Activated CD4-positive, alpha-beta memory T cell treated with anti-CD3 and anti-CD28 coated beads for 36 hours (primary cell): ENCODE measurements at regions of chr2 and their contacts with region 1.

Region 1: DNA sequence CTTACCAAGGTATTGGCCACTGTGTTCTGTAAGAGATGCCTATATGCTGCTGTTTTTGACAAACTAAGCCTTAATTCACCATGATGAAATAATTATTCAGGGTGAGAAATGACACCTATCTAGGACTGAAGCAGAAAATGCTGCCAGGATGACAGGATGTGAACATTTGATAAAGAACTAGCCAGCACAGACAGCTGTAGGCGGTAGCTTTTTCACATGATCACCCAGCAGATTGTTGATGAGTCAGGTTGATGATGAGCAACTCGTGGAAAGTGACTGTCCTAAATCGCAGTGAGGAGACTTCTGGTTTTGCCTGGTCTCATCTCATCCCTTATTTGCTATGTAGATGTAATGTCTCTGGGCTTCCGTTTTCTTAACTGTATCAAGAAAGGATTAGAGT is 144.1 kb downstream of the PRPF40A start:
- DNase-seq: peak; percentile 70
- H3K4me3 Mint-ChIP-seq: no peak overlapping the region
- H3K27ac Mint-ChIP-seq: peak overlapping the region; percentile 35
- H3K4me1 Mint-ChIP-seq: peaks cover 10% of the 10 kb centered on the region
- H3K27me3 Mint-ChIP-seq: peaks cover 14% of the 10 kb centered on the region

Region 2: DNA sequence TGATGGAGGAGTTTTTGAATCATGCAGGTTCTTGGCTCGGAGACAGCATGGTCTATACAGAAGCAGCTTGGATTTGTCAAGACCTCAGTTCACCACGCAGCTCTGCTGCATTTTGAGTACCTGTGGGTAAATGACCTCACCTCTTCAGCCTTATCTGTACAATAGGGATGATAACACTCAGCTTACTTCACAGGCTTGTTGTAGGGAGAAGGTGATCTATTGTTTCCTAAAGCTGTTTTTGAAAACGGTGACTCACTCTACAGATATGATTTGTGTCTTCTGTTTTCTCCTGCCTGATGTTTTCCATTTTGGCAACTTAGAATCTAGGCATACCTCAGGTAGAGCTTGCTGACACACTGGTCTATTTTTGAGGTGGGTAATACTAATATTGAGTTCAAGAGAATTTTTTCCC is 157.9 kb before region 1 on chr2:
- CTCF ChIA-PET with region 1: no interaction called
- POLR2A ChIA-PET with region 1: no interaction called
- intact Hi-C with region 1: loop called (anchors 1 kb)
- DNase-seq: peak; percentile 58
- H3K4me3 Mint-ChIP-seq: no peak overlapping the region
- H3K27ac Mint-ChIP-seq: peak overlapping the region; percentile 64
- H3K4me1 Mint-ChIP-seq: peaks cover 23% of the 10 kb centered on the region
- H3K27me3 Mint-ChIP-seq: peaks cover 20% of the 10 kb centered on the region

Region 3: GRCh38 chr2:152585830-152586484 is 12.8 kb after region 1 on chr2:
- CTCF ChIA-PET with region 1: interaction called, 3 read pairs
- POLR2A ChIA-PET with region 1: interaction called, 4 read pairs
- intact Hi-C with region 1: loop called (anchors 2 kb)
- DNase-seq: no peak
- H3K4me3 Mint-ChIP-seq: no peak overlapping the region
- H3K27ac Mint-ChIP-seq: no peak overlapping the region
- H3K4me1 Mint-ChIP-seq: peaks cover 11% of the 10 kb centered on the region
- H3K27me3 Mint-ChIP-seq: peaks cover 10% of the 10 kb centered on the region

Region 4: DNA sequence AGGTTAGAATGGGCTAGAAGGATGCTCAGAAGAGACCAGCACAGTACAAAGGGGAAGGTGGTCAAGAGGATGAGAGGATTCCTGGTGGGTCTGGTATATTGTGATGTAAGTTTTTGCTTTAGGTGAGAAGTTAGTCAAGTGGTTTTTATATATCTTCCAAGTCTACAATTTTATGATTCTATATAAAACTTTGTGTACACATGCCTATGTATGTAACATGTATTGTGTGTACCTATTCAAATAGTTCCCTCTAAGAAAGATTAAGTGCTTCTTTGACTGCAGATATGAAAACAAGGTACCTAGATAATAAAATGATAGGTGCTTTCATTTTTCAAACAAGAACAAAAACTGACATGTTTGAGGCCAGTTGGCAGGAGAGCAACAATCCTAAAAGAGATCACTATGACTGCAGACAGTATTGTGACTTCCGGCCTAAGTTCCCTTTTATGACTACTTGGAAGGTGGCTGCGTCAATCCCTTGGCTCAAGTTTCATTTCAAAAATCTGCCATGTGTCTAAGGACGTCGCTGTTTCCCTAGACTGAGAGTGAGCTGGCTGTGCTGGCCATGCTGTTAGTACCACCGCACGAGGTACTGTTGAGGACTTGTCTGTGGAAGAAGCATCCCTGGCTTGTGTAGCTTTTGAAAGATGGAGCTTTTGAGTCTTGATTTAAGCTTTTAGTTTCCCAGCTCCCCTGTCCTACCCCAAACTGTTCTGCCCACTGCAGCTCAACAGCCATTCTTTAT is 21.0 kb after region 1 on chr2:
- CTCF ChIA-PET with region 1: no interaction called
- POLR2A ChIA-PET with region 1: interaction called, 3 read pairs
- intact Hi-C with region 1: loop called (anchors 1 kb)
- DNase-seq: peak; percentile 40
- H3K4me3 Mint-ChIP-seq: no peak overlapping the region
- H3K27ac Mint-ChIP-seq: no peak overlapping the region
- H3K4me1 Mint-ChIP-seq: peaks cover 10% of the 10 kb centered on the region
- H3K27me3 Mint-ChIP-seq: peaks cover 6% of the 10 kb centered on the region

Region 5: GRCh38 chr2:152694161-152694661 is 121.0 kb after region 1 on chr2:
- CTCF ChIA-PET with region 1: interaction called, 4 read pairs
- POLR2A ChIA-PET with region 1: no interaction called
- intact Hi-C with region 1: loop called (anchors 2 kb)
- DNase-seq: peak; percentile 71
- H3K4me3 Mint-ChIP-seq: peak overlapping the region; percentile 60
- H3K27ac Mint-ChIP-seq: peak overlapping the region; percentile 80
- H3K4me1 Mint-ChIP-seq: peaks cover 40% of the 10 kb centered on the region
- H3K27me3 Mint-ChIP-seq: no peaks in the 10 kb centered on the region

Region 6: DNA sequence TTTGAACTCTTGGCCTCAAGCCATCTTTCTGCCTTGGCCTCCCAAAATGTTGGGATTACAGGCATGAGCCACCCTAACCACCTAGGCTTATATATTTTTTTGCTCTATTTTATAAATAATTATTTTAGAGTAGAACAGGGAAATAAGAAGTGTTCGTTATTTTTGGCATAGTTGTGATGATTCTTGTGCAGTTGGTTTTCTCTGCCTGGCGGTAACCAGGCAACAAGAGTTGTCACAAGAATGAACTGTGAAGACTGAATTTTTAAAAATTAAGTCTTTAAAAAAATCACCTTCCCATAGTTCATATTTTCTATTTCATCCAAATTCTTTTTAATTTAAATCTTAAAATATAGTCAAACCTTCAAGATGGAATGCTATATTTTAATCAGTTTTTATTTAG is 455.5 kb after region 1 on chr2:
- CTCF ChIA-PET with region 1: no interaction called
- POLR2A ChIA-PET with region 1: no interaction called
- intact Hi-C with region 1: no loop called
- DNase-seq: no peak
- H3K4me3 Mint-ChIP-seq: no peak overlapping the region
- H3K27ac Mint-ChIP-seq: no peak overlapping the region
- H3K4me1 Mint-ChIP-seq: no peaks in the 10 kb centered on the region
- H3K27me3 Mint-ChIP-seq: peaks cover 5% of the 10 kb centered on the region